ENCODE measurements at regions of chrX and their contacts with region 1.

Region 1: DNA sequence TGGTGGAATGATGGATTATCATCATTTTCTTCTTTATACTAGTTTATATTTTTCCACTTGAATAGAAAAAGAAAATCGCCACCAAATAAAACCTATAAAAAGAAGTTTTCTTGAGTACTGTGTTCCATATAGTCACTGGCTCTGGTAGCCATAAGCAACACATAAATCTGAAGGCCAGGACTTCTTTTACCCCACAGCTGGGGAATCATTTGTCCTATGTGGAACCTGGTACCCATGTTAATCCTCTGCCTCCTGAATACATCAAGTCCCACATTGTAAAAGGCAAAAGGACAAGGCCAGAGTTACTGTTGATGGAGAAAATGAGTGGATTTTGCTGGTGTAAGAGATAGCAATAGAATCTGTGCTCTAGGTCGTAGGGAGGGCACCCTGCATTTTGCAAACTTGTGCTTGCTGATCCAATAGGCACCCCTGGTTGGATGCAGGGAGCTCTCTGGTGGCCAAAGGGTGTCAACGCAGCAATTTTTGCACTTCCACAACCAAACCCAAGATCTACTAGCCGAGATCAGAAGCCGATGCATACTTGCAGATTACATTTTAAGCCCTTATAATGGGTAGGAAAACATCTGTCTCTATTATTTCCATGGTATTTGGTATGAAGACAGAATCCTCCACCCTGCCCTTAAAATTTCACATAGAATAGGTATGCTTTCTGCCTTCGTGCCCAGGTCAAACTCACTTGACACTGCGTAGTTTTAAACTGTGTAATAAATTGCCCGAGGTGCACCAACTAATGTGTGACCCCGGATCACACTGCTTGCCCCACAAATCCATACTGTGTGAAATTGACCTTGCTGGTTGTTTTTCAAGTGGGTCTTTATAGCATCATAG is 146.2 kb upstream of the SCML1 start:
- DNase-seq: peak; percentile 71
- H3K4me3 Mint-ChIP-seq: peak overlapping the region; percentile 62
- H3K27ac Mint-ChIP-seq: peak overlapping the region; percentile 95
- H3K4me1 Mint-ChIP-seq: peaks cover 47% of the 10 kb centered on the region
- H3K27me3 Mint-ChIP-seq: no peaks in the 10 kb centered on the region
- CTCF ChIP-seq: peak; percentile 71

Region 2: DNA sequence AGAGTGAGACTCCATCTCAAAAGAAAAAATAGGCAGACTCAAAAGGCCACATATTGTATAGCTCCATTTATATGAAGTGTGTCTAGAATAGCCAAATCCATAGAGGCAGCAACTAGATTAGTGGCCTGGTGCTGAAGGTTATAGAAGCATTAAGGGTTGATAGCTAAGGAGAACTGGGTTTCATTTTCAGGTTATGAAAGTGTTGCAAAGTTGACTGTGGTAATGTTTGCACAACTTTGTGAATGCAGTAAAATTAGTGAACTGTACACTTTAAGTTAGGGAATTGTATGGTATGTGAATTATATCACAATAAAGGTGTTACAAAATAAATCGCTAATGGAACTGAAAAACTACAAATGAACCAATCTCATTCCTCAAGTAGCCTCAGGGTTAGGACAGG is 776.5 kb before region 1 on chrX:
- CTCF ChIA-PET with region 1: no interaction called
- intact Hi-C with region 1: no loop called
- DNase-seq: no peak
- H3K4me3 Mint-ChIP-seq: no peak overlapping the region
- H3K27ac Mint-ChIP-seq: no peak overlapping the region
- H3K4me1 Mint-ChIP-seq: no peaks in the 10 kb centered on the region
- H3K27me3 Mint-ChIP-seq: no peaks in the 10 kb centered on the region
- CTCF ChIP-seq: no peak

Region 3: DNA sequence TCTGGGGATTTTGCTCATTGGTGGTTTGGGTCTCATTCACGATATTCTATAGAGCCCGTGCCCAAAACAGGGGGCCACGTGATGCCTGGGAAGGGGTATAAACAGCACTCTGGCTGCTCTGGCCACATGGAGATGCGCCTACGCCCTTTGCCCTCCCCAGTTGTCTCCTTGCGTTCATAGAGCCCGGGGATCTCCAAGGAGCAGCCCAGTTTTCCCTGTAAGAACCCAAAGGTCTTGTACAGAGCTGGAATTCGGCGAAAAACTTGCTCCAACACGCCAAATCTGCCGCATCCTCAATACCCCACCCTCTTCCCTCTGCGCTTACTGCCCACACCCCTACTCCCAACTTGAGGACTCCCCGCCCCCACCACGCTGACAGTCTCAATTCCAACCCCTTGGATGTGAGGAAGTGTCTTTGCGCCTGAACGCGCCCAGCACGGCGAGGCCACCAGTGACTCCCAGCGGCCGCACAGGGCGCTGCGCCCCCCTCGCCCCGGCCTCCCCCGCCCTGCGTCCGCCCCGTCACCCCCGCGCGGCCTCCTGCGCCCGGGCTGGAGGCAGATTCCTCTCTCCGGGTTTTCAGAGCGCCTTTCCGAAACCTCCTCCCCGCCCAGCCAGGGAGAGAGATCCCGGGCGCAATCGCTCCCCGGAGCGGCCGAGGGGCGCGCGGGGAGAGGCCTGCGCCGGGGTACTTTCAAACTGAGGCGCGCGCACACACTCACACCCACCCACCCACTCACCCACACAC is 216.3 kb before region 1 on chrX and contains the start of gene NHS:
- CTCF ChIA-PET with region 1: interaction called, 4 read pairs
- intact Hi-C with region 1: loop called (anchors 5 kb)
- DNase-seq: peak; percentile 84
- H3K4me3 Mint-ChIP-seq: peak within 1 kb of the TSS; percentile 87
- H3K27ac Mint-ChIP-seq: peak within 1 kb of the TSS; percentile 60
- H3K4me1 Mint-ChIP-seq: peaks cover 21% of the 10 kb centered on the region
- H3K27me3 Mint-ChIP-seq: no peaks in the 10 kb centered on the region
- CTCF ChIP-seq: peak; percentile 64
- total RNA-seq, gene NHS: 14.7 and 19.5 TPM in 2 replicates

Region 4: DNA sequence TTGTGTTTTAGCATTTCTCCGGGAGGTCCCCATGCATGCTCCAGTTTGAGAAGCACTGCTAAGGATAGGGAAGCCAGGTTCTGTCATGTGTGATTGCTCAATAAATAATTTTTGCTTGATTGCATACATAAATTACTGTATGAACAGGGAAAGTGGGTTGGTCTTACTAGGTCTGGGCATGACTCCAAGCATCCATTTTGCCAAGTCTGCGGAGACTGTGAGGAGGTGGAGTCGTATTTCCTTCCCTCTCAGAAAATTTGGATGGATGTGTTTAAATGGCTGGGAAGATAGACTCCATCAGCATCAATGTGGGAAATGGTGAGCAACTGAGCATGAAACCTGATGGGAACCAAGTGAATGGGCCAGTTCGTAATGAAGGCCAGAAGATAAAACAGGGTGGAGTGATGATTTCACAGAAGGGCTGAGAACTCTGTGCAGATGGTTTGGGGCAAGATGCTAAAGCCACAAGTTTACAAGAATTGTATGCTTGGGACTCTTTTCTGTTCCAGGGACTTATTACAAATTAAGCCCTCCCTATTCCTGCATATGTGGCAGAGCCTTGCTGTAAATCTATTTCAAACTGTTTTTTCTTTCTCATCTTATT is 132.0 kb before region 1 on chrX:
- CTCF ChIA-PET with region 1: no interaction called
- intact Hi-C with region 1: no loop called
- DNase-seq: no peak
- H3K4me3 Mint-ChIP-seq: no peak overlapping the region
- H3K27ac Mint-ChIP-seq: no peak overlapping the region
- H3K4me1 Mint-ChIP-seq: peaks cover 28% of the 10 kb centered on the region
- H3K27me3 Mint-ChIP-seq: no peaks in the 10 kb centered on the region
- CTCF ChIP-seq: no peak

Region 5: DNA sequence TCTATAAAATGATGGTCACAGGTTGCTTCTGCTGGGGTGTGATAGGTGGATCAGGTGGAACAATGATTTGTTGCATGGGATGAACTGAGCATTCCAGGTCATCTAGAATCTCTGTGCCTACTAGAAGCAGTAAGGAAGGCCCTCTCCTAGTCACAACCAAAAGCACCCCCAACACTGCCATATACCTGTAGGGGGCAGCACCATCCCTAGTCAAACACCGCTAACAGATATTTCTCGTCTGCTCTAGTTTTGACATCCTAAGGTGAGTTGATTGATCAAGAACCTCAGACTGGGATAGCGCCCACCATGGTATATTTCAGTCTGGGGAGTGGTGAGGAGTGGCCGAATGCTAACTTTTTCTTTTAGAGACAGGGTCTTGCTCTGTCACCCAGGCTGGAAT is 55.9 kb before region 1 on chrX:
- CTCF ChIA-PET with region 1: no interaction called
- intact Hi-C with region 1: loop called (anchors 1 kb)
- DNase-seq: peak; percentile 35
- H3K4me3 Mint-ChIP-seq: no peak overlapping the region
- H3K27ac Mint-ChIP-seq: no peak overlapping the region
- H3K4me1 Mint-ChIP-seq: peaks cover 24% of the 10 kb centered on the region
- H3K27me3 Mint-ChIP-seq: no peaks in the 10 kb centered on the region
- CTCF ChIP-seq: no peak

Region 6: DNA sequence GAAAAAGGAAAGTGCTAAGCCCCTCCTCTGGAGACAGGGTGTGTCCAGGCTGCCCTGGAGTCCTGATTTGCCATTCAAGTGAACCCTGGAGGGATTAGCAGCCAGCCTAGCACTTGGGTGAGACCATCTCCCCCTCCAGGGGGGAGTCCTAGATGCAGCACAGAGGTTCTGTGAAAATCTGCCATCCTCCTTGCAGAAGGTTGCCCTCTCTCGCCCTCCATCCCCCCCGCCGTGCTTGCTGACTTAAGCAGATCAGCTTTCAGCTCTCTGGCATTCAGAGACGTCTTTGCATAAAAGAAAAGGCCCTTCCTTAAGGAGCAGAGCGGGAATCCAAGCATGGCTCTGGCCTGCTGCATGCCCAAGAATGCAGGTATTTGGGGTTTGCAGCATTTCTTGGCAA is 44.1 kb after region 1 on chrX:
- CTCF ChIA-PET with region 1: interaction called, 6 read pairs
- intact Hi-C with region 1: loop called (anchors 2 kb)
- DNase-seq: peak; percentile 85
- H3K4me3 Mint-ChIP-seq: peak overlapping the region; percentile 71
- H3K27ac Mint-ChIP-seq: peak overlapping the region; percentile 17
- H3K4me1 Mint-ChIP-seq: peaks cover 44% of the 10 kb centered on the region
- H3K27me3 Mint-ChIP-seq: no peaks in the 10 kb centered on the region
- CTCF ChIP-seq: no peak

Region 7: DNA sequence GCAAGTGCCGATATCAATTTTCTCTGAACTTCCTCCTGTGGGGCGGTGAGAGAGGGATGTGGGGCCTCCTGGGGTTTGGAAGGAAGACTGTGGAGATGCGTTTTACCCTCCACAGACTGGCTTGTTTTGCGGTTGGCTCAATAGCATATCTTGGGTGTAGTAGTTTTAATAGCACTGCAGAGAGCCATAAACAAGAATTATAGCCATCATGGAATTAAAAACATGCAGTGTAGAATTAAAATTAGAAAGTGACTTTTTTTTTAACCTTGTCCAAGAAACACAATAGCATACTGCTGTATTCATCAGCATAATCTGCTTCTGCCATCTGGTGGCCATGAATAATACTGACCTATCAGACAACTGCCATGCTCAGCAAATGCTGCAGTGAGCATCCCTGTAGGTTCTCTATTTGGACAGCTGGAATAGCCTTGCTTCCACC is 98.9 kb after region 1 on chrX:
- CTCF ChIA-PET with region 1: interaction called, 4 read pairs
- intact Hi-C with region 1: loop called (anchors 1 kb)
- DNase-seq: peak; percentile 66
- H3K4me3 Mint-ChIP-seq: no peak overlapping the region
- H3K27ac Mint-ChIP-seq: peak overlapping the region; percentile 71
- H3K4me1 Mint-ChIP-seq: peaks cover 19% of the 10 kb centered on the region
- H3K27me3 Mint-ChIP-seq: no peaks in the 10 kb centered on the region
- CTCF ChIP-seq: peak; percentile 54

Measured in Calu3 (cell line).